Caco-2 (cell line): ENCODE measurements at regions of chr20 and their contacts with region 1.

Region 1: GRCh38 chr20:50790651-50791277 is 4.1 kb upstream of the BCAS4 start:
- DNase-seq: peak; percentile 100
- H3K4me3 ChIP-seq: no peak overlapping the region
- H3K4me3 Mint-ChIP-seq: peak overlapping the region; percentile 74
- H3K27ac Mint-ChIP-seq: peak overlapping the region; percentile 99
- H3K4me1 ChIP-seq: peaks cover 47% of the 10 kb centered on the region
- H3K4me1 Mint-ChIP-seq: peaks cover 62% of the 10 kb centered on the region
- H3K27me3 ChIP-seq: no peaks in the 10 kb centered on the region
- H3K27me3 Mint-ChIP-seq: no peaks in the 10 kb centered on the region
- CTCF ChIP-seq: peak; percentile 97 to 100

Region 2: GRCh38 chr20:50215101-50215690 is 575.6 kb before region 1 on chr20:
- CTCF ChIA-PET with region 1: interaction called, 11 read pairs
- POLR2A ChIA-PET with region 1: no interaction called
- intact Hi-C with region 1: no loop called
- DNase-seq: no peak
- H3K4me3 ChIP-seq: no peak overlapping the region
- H3K4me3 Mint-ChIP-seq: peak overlapping the region; percentile 27
- H3K27ac Mint-ChIP-seq: peak overlapping the region; percentile 27
- H3K4me1 ChIP-seq: peaks cover 62% of the 10 kb centered on the region
- H3K4me1 Mint-ChIP-seq: peaks cover 65% of the 10 kb centered on the region
- H3K27me3 ChIP-seq: no peaks in the 10 kb centered on the region
- H3K27me3 Mint-ChIP-seq: no peaks in the 10 kb centered on the region
- CTCF ChIP-seq: no peak

Region 3: GRCh38 chr20:50635667-50636503 is 154.9 kb before region 1 on chr20:
- CTCF ChIA-PET with region 1: interaction called, 12 read pairs
- POLR2A ChIA-PET with region 1: no interaction called
- intact Hi-C with region 1: no loop called
- DNase-seq: peak; percentile 92 to 94
- H3K4me3 ChIP-seq: no peak overlapping the region
- H3K4me3 Mint-ChIP-seq: peak overlapping the region; percentile 50
- H3K27ac Mint-ChIP-seq: peak overlapping the region; percentile 53
- H3K4me1 ChIP-seq: peaks cover 21% of the 10 kb centered on the region
- H3K4me1 Mint-ChIP-seq: peaks cover 17% of the 10 kb centered on the region
- H3K27me3 ChIP-seq: no peaks in the 10 kb centered on the region
- H3K27me3 Mint-ChIP-seq: no peaks in the 10 kb centered on the region
- CTCF ChIP-seq: peak; percentile 99

Region 4: GRCh38 chr20:50724851-50725721 is 65.7 kb before region 1 on chr20:
- CTCF ChIA-PET with region 1: interaction called, 17 read pairs
- POLR2A ChIA-PET with region 1: no interaction called
- intact Hi-C with region 1: no loop called
- DNase-seq: peak; percentile 81 to 92
- H3K4me3 ChIP-seq: no peak overlapping the region
- H3K4me3 Mint-ChIP-seq: no peak overlapping the region
- H3K27ac Mint-ChIP-seq: no peak overlapping the region
- H3K4me1 ChIP-seq: peaks cover 70% of the 10 kb centered on the region
- H3K4me1 Mint-ChIP-seq: peaks cover 30% of the 10 kb centered on the region
- H3K27me3 ChIP-seq: no peaks in the 10 kb centered on the region
- H3K27me3 Mint-ChIP-seq: no peaks in the 10 kb centered on the region
- CTCF ChIP-seq: no peak

Region 5: DNA sequence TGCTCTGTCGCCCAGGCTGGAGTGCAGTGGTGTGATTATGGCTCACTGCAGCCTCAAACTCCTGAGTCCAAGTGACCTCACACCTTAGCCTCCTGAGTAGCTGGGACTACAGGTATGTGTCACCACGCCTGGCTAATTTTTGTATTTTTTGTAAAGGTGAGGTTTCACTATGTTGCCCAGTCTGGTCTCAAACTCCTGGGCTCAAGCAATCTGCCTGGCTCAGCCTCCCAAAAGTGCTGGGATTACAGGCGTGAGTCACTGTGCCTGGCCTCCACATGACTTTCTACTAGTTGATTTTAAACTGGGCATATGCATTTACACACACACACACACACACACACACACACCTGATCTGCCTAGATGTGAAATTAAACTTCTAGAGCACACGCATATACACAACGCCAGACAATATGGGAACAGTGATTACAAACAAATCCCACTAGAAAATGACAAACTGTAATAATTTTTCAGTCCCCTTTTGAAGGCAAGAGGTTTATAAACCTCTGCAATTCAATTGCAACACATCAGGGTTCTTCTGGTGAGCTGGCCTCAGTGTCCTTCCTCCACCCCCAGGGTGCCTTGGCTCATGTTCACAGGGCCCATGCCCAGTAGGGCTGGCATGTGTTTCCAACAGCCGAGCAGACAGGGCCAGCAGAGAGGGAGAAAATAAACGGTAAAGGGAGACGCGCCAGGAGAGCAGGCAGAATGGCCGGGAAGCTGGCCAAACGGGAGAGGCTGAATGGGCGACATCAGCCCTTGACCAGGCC is 28.1 kb before region 1 on chr20:
- CTCF ChIA-PET with region 1: interaction called, 26 read pairs
- POLR2A ChIA-PET with region 1: interaction called, 21 read pairs
- intact Hi-C with region 1: loop called (anchors 1 kb)
- DNase-seq: peak; percentile 54 to 72
- H3K4me3 ChIP-seq: no peak overlapping the region
- H3K4me3 Mint-ChIP-seq: peak overlapping the region; percentile 78
- H3K27ac Mint-ChIP-seq: peak overlapping the region; percentile 100
- H3K4me1 ChIP-seq: peaks cover 87% of the 10 kb centered on the region
- H3K4me1 Mint-ChIP-seq: peaks cover 82% of the 10 kb centered on the region
- H3K27me3 ChIP-seq: no peaks in the 10 kb centered on the region
- H3K27me3 Mint-ChIP-seq: no peaks in the 10 kb centered on the region
- CTCF ChIP-seq: no peak

Region 6: GRCh38 chr20:50958615-50959542 is 168.1 kb after region 1 on chr20 and contains the start of gene MOCS3:
- CTCF ChIA-PET with region 1: interaction called, 20 read pairs
- POLR2A ChIA-PET with region 1: interaction called, 27 read pairs
- intact Hi-C with region 1: loop called (anchors 1 kb)
- DNase-seq: peak; percentile 94 to 96
- H3K4me3 ChIP-seq: peak within 1 kb of the TSS; percentile 91
- H3K4me3 Mint-ChIP-seq: peak within 1 kb of the TSS; percentile 92
- H3K27ac Mint-ChIP-seq: peak within 1 kb of the TSS; percentile 97
- H3K4me1 ChIP-seq: peaks cover 16% of the 10 kb centered on the region
- H3K4me1 Mint-ChIP-seq: peaks cover 22% of the 10 kb centered on the region
- H3K27me3 ChIP-seq: no peaks in the 10 kb centered on the region
- H3K27me3 Mint-ChIP-seq: no peaks in the 10 kb centered on the region
- CTCF ChIP-seq: peak in 1 of 2 experiments; percentile 37
- total RNA-seq, gene MOCS3: 12.9 and 13.2 TPM in 2 replicates